B cell (primary cell): ENCODE measurements at regions of chr2 and their contacts with region 1.

Region 1: DNA sequence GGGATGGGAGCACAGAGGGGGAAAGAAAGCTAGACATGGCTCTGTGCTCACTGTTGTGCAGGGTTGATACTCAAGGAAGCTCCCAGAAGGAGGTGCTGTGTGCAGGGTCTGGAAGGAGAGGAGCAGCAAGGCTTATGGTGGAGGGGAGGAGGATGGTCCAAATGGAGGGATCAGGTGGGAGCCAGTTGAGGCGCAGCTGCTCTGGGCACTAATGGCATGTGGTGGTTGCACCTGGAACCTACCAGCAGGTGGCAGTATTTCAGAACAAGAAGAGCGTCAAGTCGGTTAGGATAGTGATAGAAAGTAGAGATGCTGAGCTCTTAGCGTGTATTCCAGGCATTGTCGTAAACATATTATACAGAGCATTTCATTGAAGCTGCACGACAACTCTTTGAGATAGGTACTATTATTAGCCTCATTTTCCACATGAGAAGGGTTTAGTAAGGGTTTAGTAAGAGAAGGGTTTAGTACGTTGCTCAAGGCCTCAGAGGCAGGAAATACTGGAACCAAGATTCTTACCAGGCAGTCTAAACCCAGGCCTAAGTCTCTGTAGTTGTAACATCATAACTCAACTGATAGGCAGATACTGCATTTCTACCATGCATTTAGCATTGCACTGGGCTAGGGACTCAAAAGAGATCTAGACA is 223.7 kb downstream of the CYP26B1 start:
- DNase-seq: peak; percentile 62
- ATAC-seq: no peak
- H3K4me3 ChIP-seq: no peak overlapping the region
- H3K4me3 Mint-ChIP-seq: no peak overlapping the region
- H3K27ac ChIP-seq: no peak overlapping the region
- H3K27ac Mint-ChIP-seq: no peak overlapping the region
- H3K4me1 ChIP-seq: no peaks in the 10 kb centered on the region
- H3K4me1 Mint-ChIP-seq: no peaks in the 10 kb centered on the region
- H3K27me3 ChIP-seq: no peaks in the 10 kb centered on the region
- H3K27me3 Mint-ChIP-seq: no peaks in the 10 kb centered on the region
- CTCF ChIP-seq: peak; percentile 83

Region 2: GRCh38 chr2:71938659-71939587 is 14.9 kb after region 1 on chr2:
- CTCF ChIA-PET with region 1: interaction called, 14 read pairs
- POLR2A ChIA-PET with region 1: no interaction called
- intact Hi-C with region 1: no loop called
- DNase-seq: no peak
- ATAC-seq: no peak
- H3K4me3 ChIP-seq: no peak overlapping the region
- H3K4me3 Mint-ChIP-seq: no peak overlapping the region
- H3K27ac ChIP-seq: no peak overlapping the region
- H3K27ac Mint-ChIP-seq: no peak overlapping the region
- H3K4me1 ChIP-seq: no peaks in the 10 kb centered on the region
- H3K4me1 Mint-ChIP-seq: no peaks in the 10 kb centered on the region
- H3K27me3 ChIP-seq: no peaks in the 10 kb centered on the region
- H3K27me3 Mint-ChIP-seq: peaks cover 8% of the 10 kb centered on the region
- CTCF ChIP-seq: no peak

Region 3: GRCh38 chr2:71952572-71953529 is 28.8 kb after region 1 on chr2:
- CTCF ChIA-PET with region 1: no interaction called
- POLR2A ChIA-PET with region 1: no interaction called
- intact Hi-C with region 1: no loop called
- DNase-seq: no peak
- ATAC-seq: no peak
- H3K4me3 ChIP-seq: no peak overlapping the region
- H3K4me3 Mint-ChIP-seq: no peak overlapping the region
- H3K27ac ChIP-seq: no peak overlapping the region
- H3K27ac Mint-ChIP-seq: no peak overlapping the region
- H3K4me1 ChIP-seq: no peaks in the 10 kb centered on the region
- H3K4me1 Mint-ChIP-seq: no peaks in the 10 kb centered on the region
- H3K27me3 ChIP-seq: no peaks in the 10 kb centered on the region
- H3K27me3 Mint-ChIP-seq: no peaks in the 10 kb centered on the region
- CTCF ChIP-seq: no peak

Region 4: DNA sequence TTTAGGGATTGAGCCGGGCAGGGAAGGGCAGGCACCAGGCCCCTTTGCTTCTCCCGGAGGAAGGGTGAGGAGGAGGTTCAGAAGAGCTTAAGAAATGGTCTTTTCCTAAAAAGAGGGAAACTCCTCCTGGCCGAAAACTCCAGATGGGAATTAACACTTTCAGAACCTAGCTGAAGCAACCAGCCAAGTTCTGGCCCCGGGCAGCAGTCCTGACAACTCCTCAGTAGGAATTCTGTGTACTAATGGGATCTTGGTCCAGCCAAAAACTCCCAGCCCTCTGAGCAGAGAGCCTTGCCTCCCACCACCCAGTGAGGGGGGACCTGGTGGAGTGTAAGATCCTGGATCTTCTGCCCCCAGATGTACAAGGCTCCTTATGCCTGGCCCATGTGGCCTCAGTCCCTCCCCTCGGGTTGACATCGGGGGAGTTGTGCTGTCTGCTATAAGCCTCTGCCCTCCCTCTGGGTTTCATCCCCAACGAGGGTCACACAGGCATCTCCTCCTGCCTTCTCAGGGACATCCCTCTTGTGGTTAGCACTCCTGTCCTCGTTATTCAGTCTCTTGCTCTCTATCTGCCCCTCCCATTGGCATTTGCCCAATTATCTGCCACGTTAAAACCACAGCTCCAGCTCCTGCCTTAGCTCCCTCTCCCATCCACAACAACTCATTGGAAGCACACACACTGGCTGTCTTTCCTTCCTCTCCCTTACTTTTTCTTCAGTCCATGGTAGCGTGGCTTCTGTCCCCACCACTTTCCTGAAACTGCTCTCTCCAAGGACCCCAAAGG is 39.1 kb after region 1 on chr2:
- CTCF ChIA-PET with region 1: no interaction called
- POLR2A ChIA-PET with region 1: no interaction called
- intact Hi-C with region 1: no loop called
- DNase-seq: no peak
- ATAC-seq: no peak
- H3K4me3 ChIP-seq: no peak overlapping the region
- H3K4me3 Mint-ChIP-seq: no peak overlapping the region
- H3K27ac ChIP-seq: no peak overlapping the region
- H3K27ac Mint-ChIP-seq: no peak overlapping the region
- H3K4me1 ChIP-seq: no peaks in the 10 kb centered on the region
- H3K4me1 Mint-ChIP-seq: no peaks in the 10 kb centered on the region
- H3K27me3 ChIP-seq: peaks cover 0 to 6% (median 0%) of the 10 kb centered on the region in 4 experiments
- H3K27me3 Mint-ChIP-seq: peaks cover 5% of the 10 kb centered on the region
- CTCF ChIP-seq: no peak

Region 5: GRCh38 chr2:72150157-72150865 is 226.3 kb after region 1 on chr2:
- CTCF ChIA-PET with region 1: interaction called, 15 read pairs
- POLR2A ChIA-PET with region 1: no interaction called
- intact Hi-C with region 1: no loop called
- DNase-seq: peak; percentile 70
- ATAC-seq: peak; percentile 73
- H3K4me3 ChIP-seq: peak overlapping the region in 3 of 5 experiments; percentile 38 to 42 (median 40)
- H3K4me3 Mint-ChIP-seq: peak overlapping the region; percentile 91
- H3K27ac ChIP-seq: no peak overlapping the region
- H3K27ac Mint-ChIP-seq: peak overlapping the region; percentile 48
- H3K4me1 ChIP-seq: peaks cover 36 to 42% of the 10 kb centered on the region in 2 donors
- H3K4me1 Mint-ChIP-seq: peaks cover 39% of the 10 kb centered on the region
- H3K27me3 ChIP-seq: peaks cover 0 to 69% (median 33%) of the 10 kb centered on the region in 4 experiments
- H3K27me3 Mint-ChIP-seq: peaks cover 59% of the 10 kb centered on the region
- CTCF ChIP-seq: peak; percentile 71

Region 6: DNA sequence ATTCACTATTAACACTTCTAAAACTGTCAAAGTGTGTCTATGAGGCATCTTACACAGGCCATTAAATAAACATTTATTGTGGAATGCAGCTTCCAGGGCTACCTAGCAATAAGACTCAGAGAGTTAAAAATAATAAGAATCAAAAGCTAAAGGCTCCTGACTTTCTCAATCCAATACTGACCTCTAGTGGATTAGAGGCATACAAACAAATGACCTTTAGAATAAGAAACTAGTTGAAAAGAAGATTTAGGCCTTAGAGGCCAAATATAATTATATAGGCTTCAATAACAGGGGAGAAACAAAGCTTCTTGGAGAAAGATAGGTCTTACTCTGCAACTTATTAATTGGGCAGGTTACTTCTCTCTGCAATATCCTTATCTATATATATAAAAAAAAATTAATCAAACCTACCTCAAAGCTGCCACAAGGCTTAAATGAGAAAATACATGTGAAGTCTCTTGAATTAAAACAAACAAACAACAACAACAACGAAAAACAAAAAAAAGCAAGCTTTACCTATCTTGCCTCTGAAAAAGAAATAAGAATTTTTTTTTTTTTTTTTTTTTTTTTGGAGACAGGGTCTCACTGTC is 655.7 kb after region 1 on chr2:
- CTCF ChIA-PET with region 1: interaction called, 63 read pairs
- POLR2A ChIA-PET with region 1: no interaction called
- intact Hi-C with region 1: no loop called
- DNase-seq: peak; percentile 36
- ATAC-seq: no peak
- H3K4me3 ChIP-seq: no peak overlapping the region
- H3K4me3 Mint-ChIP-seq: no peak overlapping the region
- H3K27ac ChIP-seq: no peak overlapping the region
- H3K27ac Mint-ChIP-seq: no peak overlapping the region
- H3K4me1 ChIP-seq: no peaks in the 10 kb centered on the region
- H3K4me1 Mint-ChIP-seq: no peaks in the 10 kb centered on the region
- H3K27me3 ChIP-seq: no peaks in the 10 kb centered on the region
- H3K27me3 Mint-ChIP-seq: no peaks in the 10 kb centered on the region
- CTCF ChIP-seq: peak; percentile 73

Region 7: DNA sequence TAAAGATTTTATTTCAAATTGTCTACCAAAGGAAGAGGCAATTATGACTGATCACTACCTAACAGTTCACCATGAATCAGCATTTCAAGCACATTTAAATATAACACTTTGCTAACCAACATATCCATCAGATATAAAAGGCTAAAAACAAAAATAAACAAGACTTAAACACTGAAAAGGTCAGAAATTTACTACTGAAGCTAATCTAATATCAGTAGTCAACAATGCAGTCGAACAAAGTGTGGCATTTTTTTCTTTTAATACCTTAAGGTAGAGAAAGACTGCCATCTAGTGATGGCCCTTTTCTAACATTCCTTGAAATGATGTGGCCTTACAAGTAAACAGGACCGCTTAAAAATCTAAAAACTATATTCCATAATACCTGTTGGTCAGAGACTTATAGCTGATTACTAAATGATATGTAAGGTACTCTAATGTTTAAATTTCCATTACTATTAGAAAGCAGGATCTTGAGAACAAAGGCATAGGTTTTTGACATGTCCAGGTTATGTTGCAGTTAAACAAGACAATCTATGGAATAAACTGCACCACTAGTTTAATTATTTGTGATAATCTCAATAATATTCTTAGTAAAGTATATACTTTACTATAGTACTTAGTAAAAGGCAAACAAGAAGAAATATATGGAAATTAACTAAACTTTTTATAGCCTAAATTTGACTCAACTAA is 821.8 kb after region 1 on chr2:
- CTCF ChIA-PET with region 1: interaction called, 27 read pairs
- POLR2A ChIA-PET with region 1: no interaction called
- intact Hi-C with region 1: no loop called
- DNase-seq: peak; percentile 45
- ATAC-seq: no peak
- H3K4me3 ChIP-seq: no peak overlapping the region
- H3K4me3 Mint-ChIP-seq: no peak overlapping the region
- H3K27ac ChIP-seq: no peak overlapping the region
- H3K27ac Mint-ChIP-seq: no peak overlapping the region
- H3K4me1 ChIP-seq: no peaks in the 10 kb centered on the region
- H3K4me1 Mint-ChIP-seq: no peaks in the 10 kb centered on the region
- H3K27me3 ChIP-seq: no peaks in the 10 kb centered on the region
- H3K27me3 Mint-ChIP-seq: no peaks in the 10 kb centered on the region
- CTCF ChIP-seq: peak; percentile 72